Natural killer cell (primary cell): ENCODE measurements at regions of chr21 and their contacts with region 1.

Region 1: DNA sequence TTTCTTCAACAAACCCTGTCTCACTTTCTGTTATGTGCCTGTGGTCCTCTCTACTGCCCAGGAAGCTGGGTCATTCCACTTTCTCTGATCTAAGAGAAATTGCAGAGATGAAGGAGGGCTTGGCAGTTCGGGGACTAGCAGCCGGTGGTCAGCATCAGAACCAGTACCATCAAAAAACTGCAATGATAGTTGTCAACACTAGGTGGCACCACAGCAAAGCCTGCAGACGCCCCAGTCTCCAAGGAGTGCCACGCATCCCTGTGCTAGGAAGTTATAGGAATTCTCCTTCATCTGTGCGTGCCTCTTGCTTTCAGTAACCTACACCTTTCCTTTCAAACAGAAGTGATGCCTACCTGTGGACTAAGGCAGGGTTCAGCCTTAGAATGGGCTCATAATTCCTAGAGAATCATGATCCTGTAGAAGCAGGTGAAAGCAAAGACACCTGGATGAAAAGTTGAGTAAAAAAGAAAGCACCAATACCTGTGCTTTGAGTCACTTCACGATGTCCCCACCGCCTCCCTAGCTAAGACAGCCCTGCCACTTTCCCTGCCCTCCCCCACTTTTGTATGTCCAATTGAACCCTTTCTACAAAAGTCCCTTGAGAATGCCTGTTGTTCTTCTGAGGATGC is 129.2 kb downstream of the ADAMTS1 start:
- DNase-seq: peak in 1 of 2 donors; percentile 50
- ATAC-seq: peak in 1 of 3 donors; percentile 53
- H3K4me3 ChIP-seq: no peak overlapping the region
- H3K4me3 Mint-ChIP-seq: no peak overlapping the region
- H3K27ac ChIP-seq: no peak overlapping the region
- H3K27ac Mint-ChIP-seq: no peak overlapping the region
- H3K4me1 ChIP-seq: no peaks in the 10 kb centered on the region
- H3K4me1 Mint-ChIP-seq: no peaks in the 10 kb centered on the region
- H3K27me3 ChIP-seq: no peaks in the 10 kb centered on the region
- H3K27me3 Mint-ChIP-seq: no peaks in the 10 kb centered on the region
- CTCF ChIP-seq: peak; percentile 65

Region 2: GRCh38 chr21:25895565-25896205 is 820.3 kb before region 1 on chr21:
- intact Hi-C with region 1: loop called (anchors 5 kb)
- DNase-seq: peak in 1 of 2 donors; percentile 45
- ATAC-seq: peak; percentile 46 to 57 (median 50)
- H3K4me3 ChIP-seq: no peak overlapping the region
- H3K4me3 Mint-ChIP-seq: no peak overlapping the region
- H3K27ac ChIP-seq: no peak overlapping the region
- H3K27ac Mint-ChIP-seq: no peak overlapping the region
- H3K4me1 ChIP-seq: no peaks in the 10 kb centered on the region
- H3K4me1 Mint-ChIP-seq: no peaks in the 10 kb centered on the region
- H3K27me3 ChIP-seq: no peaks in the 10 kb centered on the region
- H3K27me3 Mint-ChIP-seq: no peaks in the 10 kb centered on the region
- CTCF ChIP-seq: peak; percentile 24